ENCODE measurements at regions of chr2 and their contacts with region 1.

Region 1: DNA sequence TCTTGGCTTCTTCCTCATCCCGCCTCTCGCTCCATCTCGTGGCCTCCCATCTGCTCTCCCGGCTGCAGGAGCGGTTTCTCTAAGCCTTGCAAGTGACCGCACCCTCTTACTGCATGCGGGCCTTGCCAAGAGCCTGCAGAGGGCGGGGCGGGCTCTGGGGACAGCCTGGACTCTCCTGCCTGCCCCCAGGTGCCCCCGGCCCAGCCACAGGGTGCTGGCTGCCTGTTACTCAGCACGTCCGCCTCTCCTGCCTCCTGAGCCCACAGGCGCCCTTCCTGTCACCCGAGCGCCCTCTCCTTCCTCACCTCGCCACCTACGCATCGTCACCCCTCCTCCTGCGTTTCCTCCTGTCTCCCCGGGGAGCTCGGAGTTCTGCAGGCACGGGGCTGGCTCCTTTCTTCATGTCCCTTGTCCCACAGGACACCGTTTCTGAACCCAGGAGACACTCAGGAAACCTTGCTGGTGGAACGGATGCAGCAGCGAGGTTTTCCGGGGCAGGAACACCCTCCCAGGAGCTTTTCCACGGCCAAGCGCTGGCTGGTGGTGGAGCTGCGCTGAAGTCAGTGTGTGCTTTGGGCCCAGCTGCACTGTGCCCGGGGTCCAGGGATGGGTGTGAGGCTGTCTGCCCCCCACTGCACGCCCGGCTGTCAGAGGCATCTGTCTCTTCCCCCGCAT is 28.5 kb downstream of the HPCAL1 start:
- DNase-seq: peak; percentile 64
- H3K4me3 Mint-ChIP-seq: peak overlapping the region; percentile 95
- H3K27ac Mint-ChIP-seq: peak overlapping the region; percentile 92
- H3K4me1 Mint-ChIP-seq: peaks cover 64% of the 10 kb centered on the region
- H3K27me3 Mint-ChIP-seq: no peaks in the 10 kb centered on the region

Region 2: GRCh38 chr2:10269711-10270610 is 61.2 kb before region 1 on chr2:
- intact Hi-C with region 1: loop called (anchors 5 kb)
- DNase-seq: no peak
- H3K4me3 Mint-ChIP-seq: no peak overlapping the region
- H3K27ac Mint-ChIP-seq: no peak overlapping the region
- H3K4me1 Mint-ChIP-seq: peaks cover 4% of the 10 kb centered on the region
- H3K27me3 Mint-ChIP-seq: peaks cover 2% of the 10 kb centered on the region

Region 3: DNA sequence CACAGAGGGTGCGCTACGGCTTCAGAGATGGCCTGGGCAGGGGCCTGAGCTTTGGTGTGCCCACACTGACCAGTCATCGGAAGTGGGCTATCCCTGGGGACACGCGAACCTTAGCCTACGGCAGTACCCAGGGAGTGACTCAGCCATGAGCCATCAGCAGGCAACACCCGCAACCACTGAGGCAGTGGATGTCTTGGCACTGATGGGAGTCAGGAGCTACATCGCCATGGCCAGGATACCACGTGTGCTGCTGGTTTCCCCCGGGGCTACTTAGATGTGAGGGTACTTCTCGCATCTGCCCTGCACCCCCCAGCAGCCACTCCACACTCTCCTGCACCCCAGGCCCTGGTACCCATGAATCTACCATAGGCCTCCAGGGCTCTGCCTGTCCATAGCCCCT is 41.3 kb before region 1 on chr2:
- intact Hi-C with region 1: no loop called
- DNase-seq: no peak
- H3K4me3 Mint-ChIP-seq: no peak overlapping the region
- H3K27ac Mint-ChIP-seq: no peak overlapping the region
- H3K4me1 Mint-ChIP-seq: peaks cover 3% of the 10 kb centered on the region
- H3K27me3 Mint-ChIP-seq: peaks cover 5% of the 10 kb centered on the region

Region 4: GRCh38 chr2:10382354-10383061 is 51.3 kb after region 1 on chr2:
- intact Hi-C with region 1: loop called (anchors 1 kb)
- DNase-seq: peak; percentile 18
- H3K4me3 Mint-ChIP-seq: peak overlapping the region; percentile 26
- H3K27ac Mint-ChIP-seq: no peak overlapping the region
- H3K4me1 Mint-ChIP-seq: peaks cover 66% of the 10 kb centered on the region
- H3K27me3 Mint-ChIP-seq: no peaks in the 10 kb centered on the region